Natural killer cell (primary cell): ENCODE measurements at regions of chr7 and their contacts with region 1.

Region 1: GRCh38 chr7:129644634-129645230 is 33.2 kb downstream of the NRF1 start:
- DNase-seq: peak in 1 of 2 donors; percentile 47
- ATAC-seq: peak in 1 of 3 donors; percentile 46
- H3K4me3 ChIP-seq: no peak overlapping the region
- H3K4me3 Mint-ChIP-seq: no peak overlapping the region
- H3K27ac ChIP-seq: no peak overlapping the region
- H3K27ac Mint-ChIP-seq: no peak overlapping the region
- H3K4me1 ChIP-seq: peaks cover 2% of the 10 kb centered on the region
- H3K4me1 Mint-ChIP-seq: peaks cover 6 to 18% of the 10 kb centered on the region in 2 donors
- H3K27me3 ChIP-seq: no peaks in the 10 kb centered on the region
- H3K27me3 Mint-ChIP-seq: no peaks in the 10 kb centered on the region
- CTCF ChIP-seq: peak; percentile 29

Region 2: GRCh38 chr7:129367700-129368388 is 276.9 kb before region 1 on chr7:
- intact Hi-C with region 1: loop called (anchors 1 kb)
- DNase-seq: peak; percentile 62 to 86
- ATAC-seq: peak; percentile 78 to 82 (median 78)
- H3K4me3 ChIP-seq: no peak overlapping the region
- H3K4me3 Mint-ChIP-seq: peak overlapping the region; percentile 73
- H3K27ac ChIP-seq: peak overlapping the region; percentile 28
- H3K27ac Mint-ChIP-seq: peak overlapping the region; percentile 14 to 81
- H3K4me1 ChIP-seq: peaks cover 14% of the 10 kb centered on the region
- H3K4me1 Mint-ChIP-seq: peaks cover 19 to 23% of the 10 kb centered on the region in 2 donors
- H3K27me3 ChIP-seq: no peaks in the 10 kb centered on the region
- H3K27me3 Mint-ChIP-seq: peaks cover 0 to 2% of the 10 kb centered on the region in 2 donors
- CTCF ChIP-seq: peak; percentile 93

Region 3: DNA sequence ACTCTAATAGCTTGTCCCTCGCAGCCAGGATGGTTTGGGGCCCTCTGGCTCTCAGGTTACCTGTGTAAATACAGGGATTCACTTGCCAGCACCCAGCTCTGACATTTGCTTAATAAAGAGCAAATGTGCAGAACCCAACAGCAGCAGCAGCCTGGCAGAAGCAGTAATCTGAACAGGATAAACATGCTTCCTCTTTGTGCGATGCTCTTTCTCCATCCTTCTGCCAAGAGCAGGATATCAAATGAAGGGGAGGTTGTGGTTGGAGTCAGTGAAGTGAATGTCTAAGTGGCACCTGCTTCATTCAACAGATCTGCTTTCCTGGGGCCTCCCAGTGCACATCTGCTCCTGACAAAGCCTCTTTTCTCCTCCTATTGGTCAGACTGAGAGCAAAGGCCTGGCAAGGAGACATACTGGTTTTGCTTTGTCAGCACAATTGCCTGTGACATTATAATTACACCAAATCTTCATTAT is 97.0 kb after region 1 on chr7:
- intact Hi-C with region 1: no loop called
- DNase-seq: no peak
- ATAC-seq: no peak
- H3K4me3 ChIP-seq: no peak overlapping the region
- H3K4me3 Mint-ChIP-seq: no peak overlapping the region
- H3K27ac ChIP-seq: no peak overlapping the region
- H3K27ac Mint-ChIP-seq: no peak overlapping the region
- H3K4me1 ChIP-seq: no peaks in the 10 kb centered on the region
- H3K4me1 Mint-ChIP-seq: no peaks in the 10 kb centered on the region
- H3K27me3 ChIP-seq: no peaks in the 10 kb centered on the region
- H3K27me3 Mint-ChIP-seq: no peaks in the 10 kb centered on the region
- CTCF ChIP-seq: no peak